ENCODE measurements at regions of chrX and their contacts with region 1.

Region 1: DNA sequence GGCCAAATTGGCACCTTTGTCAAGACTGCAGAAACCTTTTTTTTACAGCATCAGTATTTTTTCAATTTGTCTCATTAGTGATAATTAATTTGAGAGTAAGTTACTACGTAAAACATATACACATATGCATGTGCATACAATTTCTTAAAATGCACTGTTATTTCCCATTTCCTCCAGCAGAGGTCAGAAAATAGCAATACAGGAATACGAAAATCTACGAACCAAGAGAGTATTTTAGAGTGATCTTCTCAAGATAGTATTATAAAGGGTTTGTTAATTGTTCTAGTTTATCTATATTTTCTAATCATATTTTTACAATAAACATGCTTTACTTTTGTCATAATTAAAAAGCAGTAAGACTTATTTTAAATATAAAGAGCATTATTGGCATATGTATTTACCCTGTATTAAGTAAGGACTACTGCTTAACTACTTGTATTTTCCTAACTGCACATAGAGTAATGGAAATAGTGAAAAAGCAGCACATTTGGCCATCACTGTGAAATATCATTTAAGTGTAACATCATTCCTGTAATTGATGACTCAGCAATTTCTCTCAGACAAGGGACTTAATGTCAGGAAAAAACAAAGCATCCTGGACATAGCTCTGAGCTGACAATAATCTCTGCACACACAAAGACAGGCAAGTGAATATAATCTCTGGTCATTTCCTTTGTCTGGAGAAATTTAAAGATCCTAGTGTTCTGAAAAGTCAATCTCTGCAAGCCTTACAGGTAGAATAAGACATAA is 45.6 kb downstream of the MAOB start:
- H3K4me3 ChIP-seq: no peak overlapping the region
- H3K27ac ChIP-seq: no peak overlapping the region
- H3K4me1 ChIP-seq: no peaks in the 10 kb centered on the region
- CTCF ChIP-seq: no peak

Region 2: GRCh38 chrX:43456063-43456462 is 380.5 kb before region 1 on chrX:
- CTCF ChIA-PET with region 1: no interaction called
- POLR2A ChIA-PET with region 1: no interaction called
- H3K4me3 ChIP-seq: no peak overlapping the region
- H3K27ac ChIP-seq: no peak overlapping the region
- H3K4me1 ChIP-seq: no peaks in the 10 kb centered on the region
- CTCF ChIP-seq: no peak

Region 3: DNA sequence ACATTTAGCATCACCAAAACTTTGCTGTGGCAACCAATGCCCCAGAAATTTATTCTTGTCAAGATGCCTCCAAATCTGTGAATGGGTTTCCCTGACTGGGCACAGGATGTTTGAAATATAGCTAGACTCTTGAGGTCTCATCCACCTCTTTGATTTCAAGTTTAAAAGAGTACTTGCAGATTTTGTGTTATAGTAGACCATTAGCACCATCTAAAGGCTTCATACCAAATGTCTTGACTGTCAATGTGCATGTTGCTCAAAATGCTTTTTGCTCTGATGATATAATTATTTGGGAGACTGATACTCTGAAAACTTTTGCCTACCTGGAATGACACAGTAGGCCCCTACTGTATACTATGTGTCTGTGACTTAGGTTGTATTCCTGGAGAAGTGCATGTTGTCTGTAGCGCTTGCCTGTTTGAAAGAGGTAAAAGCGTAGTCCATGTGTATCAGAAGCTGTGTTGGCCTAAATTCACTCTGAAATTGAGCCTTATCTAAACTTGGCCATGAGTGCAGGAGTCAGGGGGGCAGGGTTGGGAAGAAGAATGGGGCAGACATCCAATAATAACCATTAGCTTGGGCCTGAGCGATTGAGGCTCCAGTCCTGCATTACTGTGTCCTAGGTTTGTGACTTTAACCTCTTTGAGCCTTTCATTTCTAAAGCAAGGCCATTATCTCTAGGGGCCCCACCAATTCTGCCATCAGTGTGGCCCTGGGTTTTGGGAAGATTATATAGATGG is 102.7 kb after region 1 on chrX:
- CTCF ChIA-PET with region 1: interaction called, 20 read pairs
- POLR2A ChIA-PET with region 1: no interaction called
- H3K4me3 ChIP-seq: no peak overlapping the region
- H3K27ac ChIP-seq: no peak overlapping the region
- H3K4me1 ChIP-seq: no peaks in the 10 kb centered on the region
- CTCF ChIP-seq: no peak

Measured in HEK293 (cell line).